HEK293T (cell line): ENCODE measurements at regions of chr15 and their contacts with region 1.

Region 1: GRCh38 chr15:92831655-92832328 is 68.3 kb upstream of the CHD2 start:
- DNase-seq: peak; percentile 90

Region 2: DNA sequence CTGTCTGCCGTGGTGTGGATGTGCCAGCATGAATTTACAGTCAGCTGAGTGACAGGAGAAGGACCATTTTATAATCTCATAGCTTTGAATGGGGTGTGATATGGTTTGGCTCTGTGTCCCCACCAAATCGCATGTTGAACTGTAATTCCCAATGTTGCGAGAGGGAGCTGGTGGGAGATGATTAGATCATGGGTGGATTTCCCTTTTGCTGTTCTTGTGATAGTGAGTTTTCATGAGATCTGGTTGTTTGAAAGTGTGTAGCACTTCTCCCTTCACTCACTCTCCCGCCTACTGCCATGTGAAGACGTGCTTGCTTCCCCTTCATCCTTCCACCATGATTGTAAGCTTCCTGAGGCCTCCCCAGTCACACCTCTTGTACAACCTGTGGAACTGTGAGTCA is 43.6 kb before region 1 on chr15:
- CTCF ChIA-PET with region 1: no interaction called
- POLR2A ChIA-PET with region 1: no interaction called
- DNase-seq: no peak

Region 3: GRCh38 chr15:92820236-92821021 is 11.4 kb before region 1 on chr15:
- CTCF ChIA-PET with region 1: interaction called, 5 read pairs
- POLR2A ChIA-PET with region 1: interaction called, 128 read pairs
- DNase-seq: peak; percentile 95

Region 4: DNA sequence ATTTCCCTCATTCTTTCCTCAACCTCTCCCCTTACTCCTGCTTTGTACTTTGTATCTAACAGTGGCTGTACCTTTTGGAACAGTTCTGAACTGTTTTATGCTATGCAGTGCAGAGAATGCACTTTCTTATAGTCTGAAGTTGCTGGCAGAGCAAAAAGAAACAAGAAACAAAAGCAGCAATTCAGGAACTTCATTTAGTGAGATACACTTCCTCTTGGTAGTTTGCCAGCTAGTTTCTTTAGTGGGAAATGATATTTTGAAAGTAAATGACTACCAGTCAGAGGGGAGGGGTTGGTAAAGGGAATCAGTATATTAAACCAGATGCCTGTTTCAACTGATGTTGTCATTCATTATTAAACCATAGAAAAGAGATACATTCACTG is 13.3 kb after region 1 on chr15:
- CTCF ChIA-PET with region 1: interaction called, 5 read pairs
- POLR2A ChIA-PET with region 1: interaction called, 13 read pairs
- DNase-seq: no peak

Region 5: DNA sequence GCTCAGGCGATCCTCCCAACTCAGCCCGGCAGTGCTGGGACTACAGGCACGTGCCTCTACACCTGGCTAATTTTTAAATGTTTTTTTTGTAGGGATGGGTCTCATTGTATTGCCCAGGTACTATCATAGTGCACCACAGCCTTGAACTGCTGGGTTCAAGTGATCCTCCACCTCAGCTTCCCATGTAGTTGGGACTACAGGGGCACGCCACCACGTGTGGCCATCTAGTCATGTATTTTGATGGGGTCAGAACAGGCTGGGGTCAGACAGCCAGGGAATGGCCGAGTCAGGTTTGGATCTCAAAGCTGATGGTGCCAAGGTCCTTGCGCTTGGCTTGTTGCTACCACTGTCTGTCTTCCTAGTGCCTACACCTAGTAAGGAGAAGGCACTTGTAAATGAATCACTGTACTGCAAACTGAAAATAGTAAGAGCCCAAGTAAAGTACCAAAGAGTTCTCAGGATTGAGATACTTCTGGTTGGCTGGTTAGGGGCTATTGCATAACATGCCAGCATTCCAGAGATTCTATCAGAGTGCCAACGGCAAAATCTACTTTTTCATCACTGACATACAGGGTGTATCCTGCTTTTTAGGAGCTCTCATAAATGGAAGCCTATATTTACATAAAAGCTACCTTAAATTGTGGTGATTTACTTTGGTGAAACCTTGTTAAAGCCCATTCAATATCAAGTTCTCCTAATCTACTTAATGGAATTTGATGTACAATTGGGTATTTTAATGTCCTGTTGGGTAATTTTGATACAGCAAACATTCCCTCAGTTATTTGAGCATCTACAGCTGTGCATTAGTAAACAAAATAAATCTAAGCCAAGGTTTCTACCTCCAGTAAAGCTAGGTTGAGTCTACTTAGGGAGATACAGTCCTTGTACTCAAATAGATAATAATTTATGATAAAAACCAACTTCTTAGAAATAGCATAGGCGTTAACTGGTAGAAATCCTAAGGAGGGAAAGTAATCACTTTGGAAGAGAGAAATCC is 37.5 kb after region 1 on chr15:
- CTCF ChIA-PET with region 1: interaction called, 3 read pairs
- POLR2A ChIA-PET with region 1: interaction called, 11 read pairs
- DNase-seq: no peak

Region 6: DNA sequence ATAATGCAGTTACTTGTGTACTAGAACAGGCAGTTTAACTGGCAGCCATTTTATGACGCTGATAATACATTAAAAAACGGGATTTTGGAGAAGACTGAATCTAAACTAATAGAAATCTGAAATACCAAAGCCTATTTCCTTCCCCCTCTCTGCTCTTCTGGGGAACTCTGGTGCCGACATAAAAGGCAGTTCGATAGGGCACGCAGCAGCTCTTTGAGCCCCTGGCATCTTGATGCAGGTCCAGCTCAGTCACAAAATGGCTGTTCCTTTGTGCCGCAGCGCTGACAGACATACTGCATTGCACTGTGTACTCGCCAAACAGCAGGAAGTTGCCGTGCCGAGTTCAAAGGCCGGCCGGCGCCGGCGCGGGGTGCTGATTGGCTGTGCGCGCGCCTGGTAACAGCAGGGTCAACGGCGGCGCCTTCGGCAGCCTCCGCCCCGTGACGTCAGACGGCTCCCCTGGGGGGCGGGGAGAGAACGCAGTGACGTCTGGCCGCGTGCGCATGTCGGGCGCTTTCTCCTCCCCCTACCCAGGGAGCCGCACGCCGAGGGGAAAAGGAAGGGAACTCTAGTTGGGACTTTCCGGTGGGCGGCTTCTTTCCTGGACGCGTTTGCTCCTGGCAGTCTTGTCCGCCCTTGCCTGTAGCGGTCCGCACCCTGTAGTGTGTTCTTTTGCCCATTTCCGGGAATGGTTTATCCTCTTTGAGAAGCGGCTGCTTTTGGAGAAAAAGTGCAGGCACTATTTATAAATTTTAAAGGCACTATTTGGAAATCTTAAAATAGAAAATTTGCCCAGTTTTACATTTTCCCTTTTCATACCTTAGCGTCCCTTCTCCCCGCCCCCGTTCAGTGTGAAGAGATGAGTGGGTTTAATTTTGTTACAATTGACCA is 72.4 kb after region 1 on chr15:
- CTCF ChIA-PET with region 1: no interaction called
- POLR2A ChIA-PET with region 1: interaction called, 30 read pairs
- DNase-seq: peak; percentile 92

Region 7: DNA sequence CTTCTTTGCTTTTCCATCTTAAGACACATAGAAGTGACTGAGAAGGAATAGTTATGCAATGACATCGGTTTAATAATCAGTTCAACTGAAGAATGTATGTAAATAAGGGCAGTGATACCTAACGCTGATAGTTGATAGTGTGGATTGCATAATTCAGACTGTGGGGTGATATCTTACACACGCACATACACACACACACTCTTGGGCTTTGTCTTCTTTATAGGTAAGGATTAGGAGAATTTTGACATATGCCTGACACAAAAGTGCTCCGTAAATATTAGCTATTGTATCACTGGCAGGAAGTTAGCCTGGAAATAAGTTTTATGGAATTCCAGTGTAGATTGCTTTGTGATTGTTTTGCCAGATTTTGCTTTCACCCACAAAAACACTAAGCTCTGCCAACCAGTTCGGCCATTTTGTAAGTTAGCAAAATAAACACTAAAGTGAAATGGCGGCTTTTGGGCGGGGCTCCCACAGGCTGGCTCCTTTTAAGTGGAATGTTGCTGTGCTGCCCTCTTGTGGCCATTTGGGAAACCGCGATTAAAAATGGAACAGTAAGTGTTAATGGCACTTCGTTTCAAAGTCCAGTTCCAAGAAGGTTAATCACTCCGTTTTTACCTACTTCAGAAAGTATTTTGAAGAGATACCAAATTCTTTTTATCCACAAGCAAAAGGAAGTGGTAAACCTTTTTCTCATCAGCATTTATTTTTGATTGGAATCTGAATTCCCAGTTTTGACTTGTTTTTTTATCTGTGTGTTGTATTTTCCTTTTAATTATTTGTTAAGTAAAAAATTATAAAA is 86.0 kb after region 1 on chr15:
- CTCF ChIA-PET with region 1: interaction called, 3 read pairs
- POLR2A ChIA-PET with region 1: interaction called, 12 read pairs
- DNase-seq: peak; percentile 77